ENCODE measurements at regions of chr4 and their contacts with region 1.

Region 1: GRCh38 chr4:46270986-46271596 is 118.8 kb downstream of the GABRA2 start:
- DNase-seq: no peak
- CTCF ChIP-seq: peak; percentile 47

Region 2: GRCh38 chr4:44760142-44760898 is 1510.8 kb before region 1 on chr4:
- in situ Hi-C with region 1: loop called (anchors 25 kb)
- DNase-seq: peak; percentile 7
- CTCF ChIP-seq: peak; percentile 53

Region 3: DNA sequence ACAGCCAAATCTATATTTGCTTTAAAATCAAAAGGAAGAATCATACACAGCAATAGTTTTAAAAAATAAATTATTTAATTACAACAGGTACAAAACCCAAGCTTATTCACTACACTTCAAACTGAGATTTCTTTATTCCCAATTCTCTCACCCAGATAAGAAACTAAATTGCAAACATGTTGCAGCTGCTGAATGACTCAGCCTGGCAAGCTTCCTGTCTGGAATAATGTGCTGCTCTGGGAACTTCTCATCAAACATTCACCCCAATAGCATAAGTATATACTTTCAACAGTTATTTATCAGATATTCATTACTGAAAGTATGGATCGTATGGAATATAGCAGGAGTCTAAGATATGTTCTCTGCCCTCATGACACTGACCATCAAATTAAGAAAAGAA is 161.8 kb after region 1 on chr4:
- in situ Hi-C with region 1: no loop called
- DNase-seq: no peak
- CTCF ChIP-seq: no peak